ENCODE measurements at regions of chr3 and their contacts with region 1.

Region 1: GRCh38 chr3:177378168-177378567 is 180.9 kb upstream of the TBL1XR1 start:
- DNase-seq: no peak
- H3K4me3 ChIP-seq: no peak overlapping the region
- H3K27ac ChIP-seq: no peak overlapping the region
- H3K4me1 ChIP-seq: peaks cover 2% of the 10 kb centered on the region
- H3K27me3 ChIP-seq: no peaks in the 10 kb centered on the region
- CTCF ChIP-seq: no peak
- EP300 ChIP-seq: no peak
- POLR2A ChIP-seq: no peak

Region 2: GRCh38 chr3:177263615-177264368 is 114.4 kb before region 1 on chr3:
- intact Hi-C with region 1: no loop called
- DNase-seq: no peak
- H3K4me3 ChIP-seq: no peak overlapping the region
- H3K27ac ChIP-seq: no peak overlapping the region
- H3K4me1 ChIP-seq: no peaks in the 10 kb centered on the region
- H3K27me3 ChIP-seq: no peaks in the 10 kb centered on the region
- CTCF ChIP-seq: no peak
- EP300 ChIP-seq: no peak
- POLR2A ChIP-seq: no peak

Region 3: GRCh38 chr3:177426878-177427495 is 48.8 kb after region 1 on chr3:
- intact Hi-C with region 1: loop called in 1 of 4 experiments (anchors 10 kb)
- DNase-seq: no peak
- H3K4me3 ChIP-seq: no peak overlapping the region
- H3K27ac ChIP-seq: no peak overlapping the region
- H3K4me1 ChIP-seq: peaks cover 1% of the 10 kb centered on the region
- H3K27me3 ChIP-seq: no peaks in the 10 kb centered on the region
- CTCF ChIP-seq: no peak
- EP300 ChIP-seq: no peak
- POLR2A ChIP-seq: no peak

Region 4: GRCh38 chr3:177597311-177598096 is 219.3 kb after region 1 on chr3:
- intact Hi-C with region 1: no loop called
- DNase-seq: peak; percentile 35 to 55 (median 49)
- H3K4me3 ChIP-seq: no peak overlapping the region
- H3K27ac ChIP-seq: peak overlapping the region in 1 of 2 donors; percentile 51
- H3K4me1 ChIP-seq: peaks cover 13% of the 10 kb centered on the region
- H3K27me3 ChIP-seq: no peaks in the 10 kb centered on the region
- CTCF ChIP-seq: no peak
- EP300 ChIP-seq: no peak
- POLR2A ChIP-seq: no peak

Measured in ovary (tissue), 10 donors.